Common myeloid progenitor, CD34-positive (primary cell): ENCODE measurements at regions of chr3 and their contacts with region 1.

Region 1: GRCh38 chr3:28334552-28334951 is 14.0 kb upstream of the ZCWPW2 start:
- DNase-seq: peak in 1 of 3 donors; percentile 14
- H3K4me3 ChIP-seq: no peak overlapping the region
- H3K27ac ChIP-seq: no peak overlapping the region
- H3K4me1 ChIP-seq: no peaks in the 10 kb centered on the region
- H3K27me3 ChIP-seq: no peaks in the 10 kb centered on the region

Region 2: DNA sequence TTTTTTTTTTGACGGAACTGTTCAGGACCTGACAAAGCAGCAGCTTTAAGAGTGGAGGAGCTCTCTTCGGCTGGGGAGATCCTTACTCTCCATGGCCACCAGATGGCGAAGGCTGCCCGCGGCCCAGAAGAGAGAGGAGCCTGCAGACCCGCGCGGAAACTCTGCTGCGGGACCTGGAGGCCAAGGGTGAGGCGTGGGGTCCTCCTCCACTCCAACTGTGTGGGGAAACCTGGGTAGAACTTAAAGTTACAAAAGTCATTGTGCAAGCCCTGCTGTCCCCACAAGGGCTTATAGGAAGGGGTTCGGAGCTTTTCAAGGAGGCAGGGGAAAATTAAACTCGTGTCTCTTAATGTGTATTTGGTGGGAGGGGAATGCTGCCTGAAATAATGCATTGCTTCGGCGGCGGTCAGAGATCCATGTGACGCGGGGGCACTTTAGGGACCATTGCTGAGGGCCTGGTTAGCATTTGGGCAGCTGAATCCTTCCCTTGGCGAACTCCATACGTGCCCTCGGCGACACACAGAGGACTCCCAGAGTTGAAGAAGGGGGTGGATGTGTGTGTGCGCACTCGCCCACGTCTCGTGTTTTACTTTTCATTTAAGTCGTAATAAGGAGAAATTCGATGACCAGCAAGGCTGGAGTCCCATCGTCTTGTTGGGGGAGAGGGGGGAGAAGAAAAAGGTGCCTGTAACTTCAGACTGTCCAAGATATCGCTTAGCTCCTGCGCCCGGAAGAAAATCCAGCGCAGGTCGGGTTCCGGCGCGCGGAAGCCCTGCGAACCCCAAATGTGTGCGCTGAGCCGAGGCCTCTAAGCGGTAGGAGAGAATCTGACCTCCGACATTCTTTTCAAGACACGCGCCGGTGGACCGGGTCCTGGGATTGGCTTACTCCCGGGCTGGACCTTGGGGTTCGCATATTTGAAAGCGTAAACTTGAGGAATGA is 622.1 kb before region 1 on chr3:
- CTCF ChIA-PET with region 1: interaction called, 46 read pairs
- POLR2A ChIA-PET with region 1: no interaction called
- DNase-seq: peak; percentile 87 to 92 (median 89)
- H3K4me3 ChIP-seq: peak overlapping the region; percentile 40 to 88 (median 76)
- H3K27ac ChIP-seq: no peak overlapping the region
- H3K4me1 ChIP-seq: peaks cover 5 to 32% (median 27%) of the 10 kb centered on the region in 4 experiments
- H3K27me3 ChIP-seq: peaks cover 22 to 75% (median 53%) of the 10 kb centered on the region in 5 experiments

Region 3: DNA sequence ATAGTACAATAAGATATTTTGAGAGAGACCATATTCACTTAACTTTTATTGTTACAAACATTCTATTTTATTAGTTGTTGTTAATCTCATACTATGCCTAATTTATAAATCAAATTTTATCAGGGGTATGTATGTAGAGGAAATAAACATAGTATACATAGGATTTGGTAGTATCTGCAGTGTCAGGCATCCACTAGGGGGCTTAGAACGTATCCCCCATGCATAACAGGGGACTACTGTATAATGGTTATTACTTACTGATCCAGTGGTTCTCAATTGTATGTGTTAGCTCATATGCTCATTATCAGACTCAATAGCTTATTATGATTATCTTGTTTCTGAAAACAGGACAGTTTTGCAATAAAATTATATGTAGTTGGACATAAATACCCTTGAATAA is 65.6 kb before region 1 on chr3:
- CTCF ChIA-PET with region 1: no interaction called
- POLR2A ChIA-PET with region 1: no interaction called
- DNase-seq: peak in 2 of 3 donors; percentile 10 to 15
- H3K4me3 ChIP-seq: no peak overlapping the region
- H3K27ac ChIP-seq: no peak overlapping the region
- H3K4me1 ChIP-seq: no peaks in the 10 kb centered on the region
- H3K27me3 ChIP-seq: no peaks in the 10 kb centered on the region

Region 4: DNA sequence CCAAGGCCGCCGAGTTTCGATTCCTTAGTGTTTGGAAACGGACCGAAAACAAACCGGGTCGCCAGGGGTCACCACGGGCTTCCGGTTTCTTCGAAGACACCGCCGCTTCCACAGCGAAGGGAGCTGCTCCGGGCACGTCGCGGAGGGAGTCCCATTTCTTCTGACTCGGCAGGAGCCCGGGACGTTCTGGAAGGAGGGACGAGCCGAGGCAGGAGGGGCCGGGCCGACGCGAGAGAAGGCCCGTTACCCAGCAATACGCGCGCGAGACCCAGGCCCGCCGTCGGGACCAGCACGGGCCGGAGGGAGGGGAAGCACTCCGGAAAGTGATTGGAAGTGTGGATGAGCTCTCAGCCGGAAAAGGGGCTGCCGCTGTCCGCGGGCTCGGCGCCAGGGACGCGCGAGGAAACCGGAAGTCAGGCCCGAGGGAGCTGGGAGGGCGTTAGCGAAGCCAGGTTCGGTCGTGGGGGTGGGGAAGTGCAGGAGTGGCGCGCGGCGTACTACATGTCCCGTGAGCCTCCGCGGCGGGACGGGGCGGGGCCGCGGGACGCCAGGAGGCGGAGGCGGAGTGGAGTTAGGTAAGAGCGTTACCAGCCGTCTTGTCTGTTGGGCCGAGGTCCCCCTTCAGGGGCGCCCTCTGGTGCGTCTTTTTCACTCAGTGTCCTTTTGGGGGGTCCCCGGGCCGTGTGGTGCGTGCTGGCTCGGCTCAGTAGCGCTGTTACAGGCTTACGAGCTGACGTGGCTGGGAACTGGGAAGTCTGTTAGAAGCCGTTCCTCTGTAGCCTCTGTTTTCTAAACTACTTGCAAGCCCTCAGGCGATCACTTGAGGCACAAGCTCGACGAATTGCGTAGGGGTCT is 14.3 kb after region 1 on chr3 and contains the starts of genes AZI2 and ZCWPW2:
- CTCF ChIA-PET with region 1: interaction called, 14 read pairs
- POLR2A ChIA-PET with region 1: interaction called, 6 read pairs
- DNase-seq: peak; percentile 96 to 98 (median 98)
- H3K4me3 ChIP-seq: peak within 1 kb of the TSS; percentile 71 to 94 (median 90)
- H3K27ac ChIP-seq: peak within 1 kb of the TSS; percentile 95 to 99
- H3K4me1 ChIP-seq: peaks cover 5 to 17% (median 10%) of the 10 kb centered on the region in 4 experiments
- H3K27me3 ChIP-seq: no peaks in the 10 kb centered on the region